PC-9 (cell line): ENCODE measurements at regions of chr11 and their contacts with region 1.

Region 1: DNA sequence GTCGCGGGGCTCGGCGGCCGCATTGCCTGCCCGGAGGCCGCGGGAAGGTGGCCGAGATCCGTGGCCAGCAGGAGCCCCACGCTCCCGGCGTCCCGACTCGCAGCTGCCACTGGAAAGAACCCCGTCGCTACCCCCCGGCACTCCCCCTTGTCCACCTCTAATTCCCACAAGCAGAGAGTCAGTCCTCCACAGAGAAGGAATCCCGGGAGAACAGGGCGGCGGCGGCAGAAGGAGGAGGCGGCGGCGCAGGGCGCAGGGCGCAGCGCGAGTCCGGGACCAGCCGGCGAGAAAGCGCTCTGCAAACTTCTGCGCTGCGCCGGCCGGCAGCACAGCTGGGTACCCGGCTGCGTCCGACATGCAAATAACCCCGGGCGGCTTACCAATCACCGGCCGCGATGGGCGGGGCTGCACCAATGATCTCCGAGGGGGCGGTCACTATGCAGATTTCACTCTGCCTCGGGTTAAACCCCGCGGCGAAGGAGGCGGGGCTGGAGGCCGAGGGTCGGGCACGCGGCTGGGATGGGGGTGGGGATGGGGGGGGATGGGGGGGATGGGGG is at the start of gene ABTB2:
- DNase-seq: peak; percentile 93 to 99
- H3K4me3 ChIP-seq: peak within 1 kb of the TSS; percentile 92
- H3K27ac ChIP-seq: peak within 1 kb of the TSS; percentile 67
- H3K4me1 ChIP-seq: peaks cover 41% of the 10 kb centered on the region
- H3K27me3 ChIP-seq: no peaks in the 10 kb centered on the region
- CTCF ChIP-seq: no peak
- total RNA-seq, gene ABTB2: 12.7 and 12.9 TPM in 2 replicates

Region 2: GRCh38 chr11:33857933-33858371 is 499.8 kb before region 1 on chr11:
- CTCF ChIA-PET with region 1: no interaction called
- POLR2A ChIA-PET with region 1: no interaction called
- intact Hi-C with region 1: loop called (anchors 1 kb)
- DNase-seq: peak; percentile 46 to 72
- H3K4me3 ChIP-seq: no peak overlapping the region
- H3K27ac ChIP-seq: no peak overlapping the region
- H3K4me1 ChIP-seq: no peaks in the 10 kb centered on the region
- H3K27me3 ChIP-seq: peaks cover 39% of the 10 kb centered on the region; the same call in 1 of the 2 replicates
- CTCF ChIP-seq: peak; percentile 98

Region 3: GRCh38 chr11:34051349-34052035 is 306.3 kb before region 1 on chr11 and contains the start of gene CAPRIN1:
- CTCF ChIA-PET with region 1: no interaction called
- POLR2A ChIA-PET with region 1: no interaction called
- intact Hi-C with region 1: loop called (anchors 2 kb)
- DNase-seq: peak; percentile 84 to 93
- H3K4me3 ChIP-seq: peak within 1 kb of the TSS; percentile 72
- H3K27ac ChIP-seq: peak within 1 kb of the TSS; percentile 94
- H3K4me1 ChIP-seq: peaks cover 39% of the 10 kb centered on the region
- H3K27me3 ChIP-seq: no peaks in the 10 kb centered on the region
- CTCF ChIP-seq: no peak
- total RNA-seq, gene CAPRIN1: 258 and 289 TPM in 2 replicates

Region 4: GRCh38 chr11:34161812-34162499 is 195.8 kb before region 1 on chr11:
- CTCF ChIA-PET with region 1: interaction called, 3 read pairs
- POLR2A ChIA-PET with region 1: interaction called, 4 read pairs
- intact Hi-C with region 1: loop called (anchors 2 kb)
- DNase-seq: peak; percentile 17 to 53
- H3K4me3 ChIP-seq: no peak overlapping the region
- H3K27ac ChIP-seq: no peak overlapping the region
- H3K4me1 ChIP-seq: peaks cover 17% of the 10 kb centered on the region
- H3K27me3 ChIP-seq: no peaks in the 10 kb centered on the region
- CTCF ChIP-seq: no peak

Region 5: DNA sequence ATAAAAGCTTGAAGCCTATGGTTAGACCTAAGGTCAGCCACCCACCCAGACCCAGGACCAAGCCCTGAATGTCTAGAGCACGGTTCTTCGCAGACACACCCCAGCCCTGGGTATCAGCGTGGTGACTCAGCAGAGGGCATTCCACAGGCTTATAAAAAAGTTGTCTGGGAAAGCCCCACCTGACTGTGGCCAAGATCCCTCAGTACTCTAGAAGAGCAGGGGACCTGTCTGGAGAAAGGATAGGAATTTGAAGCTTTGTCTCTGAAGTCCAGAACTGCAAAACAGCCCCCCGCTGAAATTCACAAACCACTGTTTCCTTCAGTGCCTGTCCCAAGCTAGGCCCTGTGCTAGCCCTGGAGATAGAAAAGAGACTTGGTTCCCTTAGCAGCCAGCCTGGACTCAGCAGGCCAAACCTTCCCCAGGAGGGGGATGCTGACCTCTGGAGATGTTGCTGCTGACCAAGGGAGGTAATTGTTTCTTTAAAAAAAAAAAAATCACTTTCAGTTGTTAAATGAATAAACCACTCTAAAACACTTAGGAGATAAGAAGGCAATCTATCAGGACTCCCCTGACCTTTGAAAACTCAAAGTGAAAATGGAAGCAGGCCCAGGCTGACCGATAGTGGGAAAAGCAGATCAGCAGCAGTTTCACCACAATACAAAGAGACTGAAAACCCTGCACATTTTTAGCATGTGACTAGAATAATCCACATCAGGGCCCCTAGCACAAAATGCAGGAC is 113.9 kb before region 1 on chr11:
- CTCF ChIA-PET with region 1: no interaction called
- POLR2A ChIA-PET with region 1: no interaction called
- intact Hi-C with region 1: loop called (anchors 1 kb)
- DNase-seq: peak; percentile 90 to 95
- H3K4me3 ChIP-seq: no peak overlapping the region
- H3K27ac ChIP-seq: peak overlapping the region; percentile 76
- H3K4me1 ChIP-seq: peaks cover 64% of the 10 kb centered on the region
- H3K27me3 ChIP-seq: no peaks in the 10 kb centered on the region
- CTCF ChIP-seq: no peak

Region 6: DNA sequence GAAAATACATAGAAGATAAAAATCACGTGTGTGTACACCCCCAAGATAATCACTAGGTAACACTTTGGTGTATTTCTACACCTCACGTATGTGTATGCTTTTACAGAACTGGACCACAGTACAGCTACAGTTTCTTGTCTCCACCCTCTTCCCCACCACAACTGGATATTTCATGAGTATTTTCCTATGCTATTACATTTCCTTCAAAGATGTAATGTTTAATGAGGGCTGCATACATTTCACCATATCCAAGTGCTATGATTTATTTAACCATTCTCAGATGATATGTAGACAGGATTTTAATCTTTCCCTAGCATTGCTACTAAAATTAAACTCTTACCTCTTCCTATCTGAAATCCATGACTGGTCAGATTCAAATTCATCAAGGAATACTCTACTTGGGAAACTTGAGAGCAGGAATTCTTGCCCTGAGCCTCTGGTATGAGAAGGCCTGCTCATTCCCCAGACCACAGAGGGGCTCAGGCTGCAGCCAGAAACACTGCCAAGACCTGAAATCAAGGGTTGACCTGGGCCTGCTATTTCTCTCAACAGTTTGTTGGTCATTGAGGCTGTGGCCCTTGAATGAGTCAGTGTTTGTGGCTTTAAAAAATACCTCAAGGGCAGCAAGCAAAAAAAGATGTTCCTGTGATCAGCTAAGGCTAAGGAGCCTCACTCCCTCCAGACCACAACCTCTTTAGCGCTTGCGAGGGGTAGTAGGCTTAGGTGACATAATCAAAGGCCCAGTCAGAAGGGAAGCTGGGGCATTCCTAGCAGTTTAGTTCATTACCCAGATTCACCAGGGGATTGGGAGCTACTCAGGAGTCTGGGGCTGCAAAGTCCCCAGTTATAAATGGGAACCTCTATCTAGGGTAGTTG is 55.5 kb before region 1 on chr11:
- CTCF ChIA-PET with region 1: interaction called, 4 read pairs
- POLR2A ChIA-PET with region 1: interaction called, 3 read pairs
- intact Hi-C with region 1: loop called (anchors 1 kb)
- DNase-seq: peak; percentile 77 to 98
- H3K4me3 ChIP-seq: no peak overlapping the region
- H3K27ac ChIP-seq: peak overlapping the region; percentile 61
- H3K4me1 ChIP-seq: peaks cover 90% of the 10 kb centered on the region
- H3K27me3 ChIP-seq: no peaks in the 10 kb centered on the region
- CTCF ChIP-seq: no peak

Region 7: DNA sequence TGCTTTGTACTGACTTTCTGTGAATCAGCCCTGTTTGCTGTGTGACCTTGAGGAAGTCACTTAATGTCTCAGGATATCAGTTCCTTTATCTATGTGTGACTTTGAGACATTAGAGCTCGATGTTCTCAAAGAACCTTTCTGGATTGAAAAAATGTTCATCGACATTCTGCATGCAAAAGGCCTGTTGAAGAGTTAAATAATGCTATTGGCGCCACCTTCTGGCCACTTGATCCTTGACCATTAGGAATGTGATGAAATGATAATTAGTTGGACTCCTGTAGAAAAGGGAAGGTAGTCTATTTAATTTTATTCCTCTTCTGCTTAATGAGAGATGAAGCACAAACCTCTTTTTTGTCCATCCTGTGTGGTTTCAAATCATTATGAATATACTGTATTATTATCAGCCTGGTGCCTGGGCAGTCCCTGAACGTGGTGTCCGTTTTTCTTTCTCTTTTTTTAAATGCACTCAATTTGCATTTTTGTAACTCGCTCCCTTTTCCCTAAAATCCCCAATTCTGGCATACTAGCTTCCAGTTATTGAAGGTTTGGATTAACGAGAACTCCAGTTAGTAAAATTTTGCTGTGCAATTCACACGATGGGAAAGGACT is 135.1 kb after region 1 on chr11:
- CTCF ChIA-PET with region 1: no interaction called
- POLR2A ChIA-PET with region 1: no interaction called
- intact Hi-C with region 1: loop called (anchors 2 kb)
- DNase-seq: peak; percentile 41 to 62
- H3K4me3 ChIP-seq: no peak overlapping the region
- H3K27ac ChIP-seq: no peak overlapping the region
- H3K4me1 ChIP-seq: peaks cover 8% of the 10 kb centered on the region
- H3K27me3 ChIP-seq: no peaks in the 10 kb centered on the region
- CTCF ChIP-seq: peak; percentile 91